ENCODE measurements at regions of chr7 and their contacts with region 1.

Region 1: DNA sequence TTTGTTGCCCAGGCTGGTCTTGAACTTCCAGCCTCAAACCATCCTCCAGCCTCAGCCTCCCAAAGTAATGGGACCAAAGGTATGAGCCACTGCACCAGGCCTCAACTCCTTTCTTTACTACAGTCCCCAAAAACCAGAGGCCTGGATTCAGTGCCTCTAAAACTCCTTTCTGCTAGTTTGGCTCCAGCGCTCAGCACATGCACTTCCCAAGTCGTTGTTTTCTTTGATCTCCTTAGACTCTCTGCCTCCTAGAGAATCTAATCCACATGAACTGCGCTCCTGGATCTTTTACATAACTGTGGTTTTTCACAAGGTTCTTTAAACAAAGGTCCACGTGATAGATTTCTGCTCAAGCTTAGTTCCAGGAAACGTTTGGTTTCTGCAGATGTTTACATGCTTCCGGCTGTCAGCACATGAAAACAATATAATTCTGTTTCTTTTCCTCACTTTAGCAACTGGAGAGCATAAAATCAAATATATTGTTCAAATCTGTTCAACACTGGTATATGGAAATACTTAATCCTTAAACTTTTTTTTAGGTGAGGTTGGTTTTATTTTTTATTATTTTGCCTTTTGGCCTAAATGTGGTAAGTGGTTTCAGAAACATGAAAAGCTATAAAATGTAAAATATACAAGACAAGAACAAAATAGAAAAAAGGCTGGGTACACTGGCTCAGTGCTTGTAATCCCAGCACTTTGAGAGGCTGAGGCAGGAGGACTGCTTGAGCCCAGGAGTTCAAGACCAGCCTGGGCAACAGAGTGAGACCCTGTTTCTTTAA is 270.5 kb upstream of the MKLN1 start:
- DNase-seq: peak in 11 of 35 experiments; percentile 21 to 75 (median 41)
- ATAC-seq: peak; percentile 63 to 77 (median 64)
- H3K4me3 ChIP-seq: peak overlapping the region in 1 of 2 donors; percentile 12
- H3K4me3 Mint-ChIP-seq: peak overlapping the region; percentile 60 to 80 (median 63)
- H3K27ac ChIP-seq: peak overlapping the region; percentile 93
- H3K27ac Mint-ChIP-seq: peak overlapping the region; percentile 93 to 99
- H3K4me1 ChIP-seq: peaks cover 25 to 78% of the 10 kb centered on the region in 2 experiments
- H3K4me1 Mint-ChIP-seq: peaks cover 77 to 81% (median 80%) of the 10 kb centered on the region in 3 donors
- H3K27me3 ChIP-seq: no peaks in the 10 kb centered on the region
- H3K27me3 Mint-ChIP-seq: no peaks in the 10 kb centered on the region

Region 2: GRCh38 chr7:129923709-129924108 is 1133.5 kb before region 1 on chr7:
- CTCF ChIA-PET with region 1: no interaction called
- POLR2A ChIA-PET with region 1: no interaction called
- DNase-seq: no peak
- ATAC-seq: no peak
- H3K4me3 ChIP-seq: no peak overlapping the region
- H3K4me3 Mint-ChIP-seq: peak overlapping the region in 1 of 3 donors; percentile 52
- H3K27ac ChIP-seq: no peak overlapping the region
- H3K27ac Mint-ChIP-seq: peak overlapping the region; percentile 10 to 12
- H3K4me1 ChIP-seq: peaks cover 0 to 4% of the 10 kb centered on the region in 2 experiments
- H3K4me1 Mint-ChIP-seq: peaks cover 48 to 55% (median 50%) of the 10 kb centered on the region in 3 donors
- H3K27me3 ChIP-seq: no peaks in the 10 kb centered on the region
- H3K27me3 Mint-ChIP-seq: no peaks in the 10 kb centered on the region

Region 3: DNA sequence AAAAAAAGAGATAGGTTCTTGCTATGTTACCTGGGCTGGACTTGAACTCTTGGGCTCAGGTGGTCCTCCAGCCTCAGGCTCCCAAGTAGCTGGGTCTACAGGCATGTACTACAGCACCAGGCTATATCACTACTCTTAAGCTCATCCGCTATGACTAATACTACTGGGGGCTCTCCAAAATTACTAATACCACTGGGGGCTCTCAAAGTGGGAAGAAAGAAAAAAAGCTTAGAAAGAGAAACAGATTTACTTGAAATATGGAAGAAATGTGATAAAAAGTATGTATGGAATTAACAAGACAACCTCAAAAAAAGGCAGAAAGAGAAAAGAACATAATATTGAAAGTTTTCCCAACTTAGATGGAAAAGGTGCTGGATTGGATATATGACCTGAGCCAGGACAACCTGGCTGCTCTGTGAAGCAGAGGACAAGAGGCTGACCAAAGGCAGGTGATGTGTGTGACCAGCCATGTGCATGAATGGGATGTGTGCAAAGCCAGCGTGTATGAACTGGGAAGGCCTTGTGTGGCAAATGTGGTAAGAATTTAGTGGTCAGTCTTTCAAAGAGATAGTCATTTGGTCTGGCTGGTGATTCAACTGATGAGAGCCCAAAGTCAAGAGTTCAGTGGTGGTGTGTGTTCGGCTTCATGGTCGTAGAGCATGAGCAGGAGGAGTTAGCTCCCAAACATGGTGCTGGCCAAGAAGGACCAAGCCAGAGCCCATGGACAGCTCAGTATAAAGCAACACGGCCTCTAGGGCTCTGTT is 90.8 kb before region 1 on chr7:
- CTCF ChIA-PET with region 1: no interaction called
- POLR2A ChIA-PET with region 1: interaction called in 1 of 2 experiments, 12 read pairs
- DNase-seq: no peak
- ATAC-seq: no peak
- H3K4me3 ChIP-seq: no peak overlapping the region
- H3K4me3 Mint-ChIP-seq: no peak overlapping the region
- H3K27ac ChIP-seq: no peak overlapping the region
- H3K27ac Mint-ChIP-seq: peak overlapping the region; percentile 47 to 56
- H3K4me1 ChIP-seq: peaks cover 11 to 35% of the 10 kb centered on the region in 2 experiments
- H3K4me1 Mint-ChIP-seq: peaks cover 60 to 71% (median 63%) of the 10 kb centered on the region in 3 donors
- H3K27me3 ChIP-seq: no peaks in the 10 kb centered on the region
- H3K27me3 Mint-ChIP-seq: no peaks in the 10 kb centered on the region

Region 4: GRCh38 chr7:131027287-131027773 is 29.9 kb before region 1 on chr7:
- CTCF ChIA-PET with region 1: no interaction called
- POLR2A ChIA-PET with region 1: interaction called, 3 to 17 read pairs
- DNase-seq: peak in 19 of 35 experiments; percentile 28 to 60 (median 40)
- ATAC-seq: peak; percentile 38 to 62 (median 50)
- H3K4me3 ChIP-seq: no peak overlapping the region
- H3K4me3 Mint-ChIP-seq: peak overlapping the region; percentile 19 to 41 (median 38)
- H3K27ac ChIP-seq: peak overlapping the region; percentile 66
- H3K27ac Mint-ChIP-seq: peak overlapping the region; percentile 80
- H3K4me1 ChIP-seq: peaks cover 0 to 63% of the 10 kb centered on the region in 2 experiments
- H3K4me1 Mint-ChIP-seq: peaks cover 86 to 92% (median 88%) of the 10 kb centered on the region in 3 donors
- H3K27me3 ChIP-seq: no peaks in the 10 kb centered on the region
- H3K27me3 Mint-ChIP-seq: no peaks in the 10 kb centered on the region

Region 5: GRCh38 chr7:131071786-131072504 is 14.7 kb after region 1 on chr7:
- CTCF ChIA-PET with region 1: interaction called, 3 to 14 read pairs
- POLR2A ChIA-PET with region 1: interaction called, 8 to 11 read pairs
- DNase-seq: no peak
- ATAC-seq: no peak
- H3K4me3 ChIP-seq: no peak overlapping the region
- H3K4me3 Mint-ChIP-seq: peak overlapping the region in 1 of 3 donors; percentile 62
- H3K27ac ChIP-seq: no peak overlapping the region
- H3K27ac Mint-ChIP-seq: peak overlapping the region; percentile 43 to 58
- H3K4me1 ChIP-seq: peaks cover 2 to 40% of the 10 kb centered on the region in 2 experiments
- H3K4me1 Mint-ChIP-seq: peaks cover 37 to 93% (median 91%) of the 10 kb centered on the region in 3 donors
- H3K27me3 ChIP-seq: no peaks in the 10 kb centered on the region
- H3K27me3 Mint-ChIP-seq: no peaks in the 10 kb centered on the region

Region 6: GRCh38 chr7:131090886-131091692 is 33.9 kb after region 1 on chr7:
- CTCF ChIA-PET with region 1: interaction called in 1 of 2 experiments, 4 read pairs
- POLR2A ChIA-PET with region 1: interaction called, 5 to 10 read pairs
- DNase-seq: no peak
- ATAC-seq: peak in 2 of 4 experiments; percentile 3 to 6
- H3K4me3 ChIP-seq: no peak overlapping the region
- H3K4me3 Mint-ChIP-seq: peak overlapping the region in 2 of 3 donors; percentile 13 to 60
- H3K27ac ChIP-seq: no peak overlapping the region
- H3K27ac Mint-ChIP-seq: peak overlapping the region; percentile 19 to 53
- H3K4me1 ChIP-seq: peaks cover 0 to 53% of the 10 kb centered on the region in 2 experiments
- H3K4me1 Mint-ChIP-seq: peaks cover 84 to 88% (median 87%) of the 10 kb centered on the region in 3 donors
- H3K27me3 ChIP-seq: no peaks in the 10 kb centered on the region
- H3K27me3 Mint-ChIP-seq: no peaks in the 10 kb centered on the region

Region 7: GRCh38 chr7:131096267-131096927 is 39.2 kb after region 1 on chr7:
- CTCF ChIA-PET with region 1: interaction called in 1 of 2 experiments, 4 read pairs
- POLR2A ChIA-PET with region 1: interaction called in 1 of 2 experiments, 10 read pairs
- DNase-seq: peak in 1 of 35 experiments; percentile 13
- ATAC-seq: no peak
- H3K4me3 ChIP-seq: no peak overlapping the region
- H3K4me3 Mint-ChIP-seq: peak overlapping the region; percentile 0 to 32 (median 21)
- H3K27ac ChIP-seq: no peak overlapping the region
- H3K27ac Mint-ChIP-seq: peak overlapping the region in 1 of 2 donors; percentile 6
- H3K4me1 ChIP-seq: peaks cover 0 to 70% of the 10 kb centered on the region in 2 experiments
- H3K4me1 Mint-ChIP-seq: peaks cover 93 to 100% (median 94%) of the 10 kb centered on the region in 3 donors
- H3K27me3 ChIP-seq: no peaks in the 10 kb centered on the region
- H3K27me3 Mint-ChIP-seq: no peaks in the 10 kb centered on the region

Region 8: DNA sequence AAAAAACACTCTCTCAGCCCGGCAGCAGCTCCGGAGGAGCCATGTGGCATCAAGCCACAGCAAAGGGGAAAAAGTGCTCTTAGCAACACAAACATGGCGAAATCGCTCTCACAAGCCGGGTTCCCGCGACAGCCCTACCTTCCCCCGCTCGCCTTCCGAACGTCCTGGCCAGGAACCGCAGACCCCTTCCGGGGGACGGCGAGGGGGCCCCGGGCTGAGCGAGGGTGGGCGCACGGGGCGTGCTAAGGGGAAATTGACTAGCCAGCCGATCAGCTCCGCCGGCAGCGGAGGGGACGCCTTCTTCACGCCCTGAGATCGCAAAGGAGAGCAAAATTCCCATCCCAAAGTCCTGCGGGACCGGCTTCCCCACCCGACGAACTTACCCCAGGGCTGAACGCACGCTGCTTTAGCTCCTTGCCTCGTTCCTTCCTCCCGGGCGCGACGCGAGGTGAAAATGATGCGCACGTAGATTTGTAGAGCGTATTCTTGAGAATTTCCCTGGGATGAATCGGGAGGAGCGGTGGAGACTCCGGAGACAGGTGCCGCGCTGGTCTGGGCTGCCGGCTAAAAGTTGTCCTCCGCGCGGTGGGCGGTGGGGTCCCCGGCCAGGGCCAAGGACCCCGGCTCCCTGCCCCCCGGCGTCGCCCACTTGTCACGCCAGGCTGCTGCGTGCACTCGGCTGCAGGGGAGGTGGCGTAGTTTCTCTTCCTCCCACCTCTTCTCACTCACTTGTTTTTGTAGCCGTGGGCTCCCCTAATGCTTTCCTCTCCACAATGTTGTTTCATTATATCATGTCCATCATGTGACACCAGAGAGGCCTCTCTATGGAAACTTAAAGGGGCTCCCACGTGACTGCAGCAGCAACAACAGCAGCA is 50.4 kb after region 1 on chr7:
- CTCF ChIA-PET with region 1: no interaction called
- POLR2A ChIA-PET with region 1: interaction called, 3 to 16 read pairs
- DNase-seq: peak; percentile 39 to 90 (median 72)
- ATAC-seq: peak; percentile 40 to 59 (median 56)
- H3K4me3 ChIP-seq: peak overlapping the region; percentile 98 to 99
- H3K4me3 Mint-ChIP-seq: peak overlapping the region; percentile 95 to 99 (median 98)
- H3K27ac ChIP-seq: peak overlapping the region; percentile 91
- H3K27ac Mint-ChIP-seq: peak overlapping the region; percentile 96 to 99
- H3K4me1 ChIP-seq: peaks cover 17 to 49% of the 10 kb centered on the region in 2 experiments
- H3K4me1 Mint-ChIP-seq: peaks cover 63 to 68% (median 68%) of the 10 kb centered on the region in 3 donors
- H3K27me3 ChIP-seq: no peaks in the 10 kb centered on the region
- H3K27me3 Mint-ChIP-seq: no peaks in the 10 kb centered on the region

Region 9: GRCh38 chr7:131145026-131145425 is 87.8 kb after region 1 on chr7:
- CTCF ChIA-PET with region 1: no interaction called
- POLR2A ChIA-PET with region 1: no interaction called
- DNase-seq: no peak
- ATAC-seq: no peak
- H3K4me3 ChIP-seq: no peak overlapping the region
- H3K4me3 Mint-ChIP-seq: no peak overlapping the region
- H3K27ac ChIP-seq: no peak overlapping the region
- H3K27ac Mint-ChIP-seq: no peak overlapping the region
- H3K4me1 ChIP-seq: no peaks in the 10 kb centered on the region
- H3K4me1 Mint-ChIP-seq: peaks cover 0 to 3% (median 0%) of the 10 kb centered on the region in 3 donors
- H3K27me3 ChIP-seq: peaks cover 0 to 2% of the 10 kb centered on the region in 2 experiments
- H3K27me3 Mint-ChIP-seq: no peaks in the 10 kb centered on the region

Measured in T-cell (primary cell).